K562 (cell line): ENCODE measurements at regions of chr2 and their contacts with region 1.

Region 1: GRCh38 chr2:102141011-102141943 is 1.3 kb upstream of the IL1R1 start:
- DNase-seq: no peak
- ATAC-seq: no peak
- H3K4me3 ChIP-seq: no peak overlapping the region
- H3K27ac ChIP-seq: no peak overlapping the region
- H3K4me1 ChIP-seq: peaks cover 14 to 16% of the 10 kb centered on the region in 2 experiments
- H3K27me3 ChIP-seq: no peaks in the 10 kb centered on the region
- CTCF ChIP-seq: no peak
- EP300 ChIP-seq: no peak
- POLR2A ChIP-seq: no peak
- RAD21 ChIP-seq: no peak

Region 2: DNA sequence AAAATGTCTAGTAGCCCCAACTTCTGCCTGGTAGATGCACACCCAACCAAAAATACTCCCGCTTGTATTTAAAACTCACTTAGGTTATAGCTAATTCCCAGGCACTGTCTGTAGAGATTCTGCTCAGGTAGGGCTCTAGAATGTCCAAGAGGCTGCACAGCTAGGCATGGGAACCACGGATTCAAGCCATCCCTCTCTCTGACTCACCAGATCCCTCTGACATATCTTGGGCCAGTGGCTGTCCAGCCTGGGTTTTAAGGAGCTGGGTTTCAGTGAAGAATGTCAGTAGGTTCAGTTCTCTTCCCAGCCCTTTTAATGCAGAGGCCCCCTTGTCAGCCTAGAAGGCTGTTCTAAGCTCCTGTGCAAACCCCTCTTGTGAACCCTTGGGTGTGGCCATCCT is 14.6 kb before region 1 on chr2:
- CTCF ChIA-PET with region 1: no interaction called
- POLR2A ChIA-PET with region 1: interaction called, 10 read pairs
- in situ Hi-C with region 1: no loop called
- intact Hi-C with region 1: no loop called
- DNase-seq: no peak
- ATAC-seq: no peak
- H3K4me3 ChIP-seq: no peak overlapping the region
- H3K27ac ChIP-seq: no peak overlapping the region
- H3K4me1 ChIP-seq: no peaks in the 10 kb centered on the region
- H3K27me3 ChIP-seq: no peaks in the 10 kb centered on the region
- CTCF ChIP-seq: no peak
- EP300 ChIP-seq: no peak
- POLR2A ChIP-seq: no peak
- RAD21 ChIP-seq: no peak

Region 3: GRCh38 chr2:102355526-102356380 is 214.5 kb after region 1 on chr2 and contains the start of gene IL18R1:
- CTCF ChIA-PET with region 1: no interaction called
- POLR2A ChIA-PET with region 1: no interaction called
- in situ Hi-C with region 1: no loop called
- intact Hi-C with region 1: no loop called
- DNase-seq: peak; percentile 58 to 84 (median 71)
- ATAC-seq: peak; percentile 100
- H3K4me3 ChIP-seq: peak within 1 kb of the TSS; percentile 69
- H3K27ac ChIP-seq: peak within 1 kb of the TSS; percentile 47; the same call in 2 of the 3 replicates
- H3K4me1 ChIP-seq: peaks cover 0 to 12% of the 10 kb centered on the region in 2 experiments; a peak in 2 of 5 replicates
- H3K27me3 ChIP-seq: no peaks in the 10 kb centered on the region
- CTCF ChIP-seq: peak; percentile 82 to 94 (median 90)
- EP300 ChIP-seq: no peak
- POLR2A ChIP-seq: no peak
- RAD21 ChIP-seq: peak; percentile 97 to 99
- polyA plus RNA-seq, gene IL18R1: 0.55 to 0.81 TPM